ENCODE measurements at regions of chrX and their contacts with region 1.

Region 1: GRCh38 chrX:24100713-24101112 is 46.0 kb downstream of the EIF2S3 start:
- DNase-seq: peak; percentile 6
- ATAC-seq: no peak
- H3K4me3 Mint-ChIP-seq: no peak overlapping the region
- H3K27ac Mint-ChIP-seq: no peak overlapping the region
- H3K4me1 Mint-ChIP-seq: peaks cover 18% of the 10 kb centered on the region
- H3K27me3 Mint-ChIP-seq: no peaks in the 10 kb centered on the region

Region 2: GRCh38 chrX:23822397-23822796 is 278.3 kb before region 1 on chrX:
- CTCF ChIA-PET with region 1: no interaction called
- POLR2A ChIA-PET with region 1: no interaction called
- intact Hi-C with region 1: no loop called
- DNase-seq: no peak
- ATAC-seq: no peak
- H3K4me3 Mint-ChIP-seq: no peak overlapping the region
- H3K27ac Mint-ChIP-seq: no peak overlapping the region
- H3K4me1 Mint-ChIP-seq: no peaks in the 10 kb centered on the region
- H3K27me3 Mint-ChIP-seq: no peaks in the 10 kb centered on the region

Region 3: GRCh38 chrX:24133280-24133679 is 32.6 kb after region 1 on chrX:
- CTCF ChIA-PET with region 1: no interaction called
- POLR2A ChIA-PET with region 1: no interaction called
- intact Hi-C with region 1: no loop called
- DNase-seq: no peak
- ATAC-seq: no peak
- H3K4me3 Mint-ChIP-seq: no peak overlapping the region
- H3K27ac Mint-ChIP-seq: no peak overlapping the region
- H3K4me1 Mint-ChIP-seq: no peaks in the 10 kb centered on the region
- H3K27me3 Mint-ChIP-seq: no peaks in the 10 kb centered on the region

Region 4: DNA sequence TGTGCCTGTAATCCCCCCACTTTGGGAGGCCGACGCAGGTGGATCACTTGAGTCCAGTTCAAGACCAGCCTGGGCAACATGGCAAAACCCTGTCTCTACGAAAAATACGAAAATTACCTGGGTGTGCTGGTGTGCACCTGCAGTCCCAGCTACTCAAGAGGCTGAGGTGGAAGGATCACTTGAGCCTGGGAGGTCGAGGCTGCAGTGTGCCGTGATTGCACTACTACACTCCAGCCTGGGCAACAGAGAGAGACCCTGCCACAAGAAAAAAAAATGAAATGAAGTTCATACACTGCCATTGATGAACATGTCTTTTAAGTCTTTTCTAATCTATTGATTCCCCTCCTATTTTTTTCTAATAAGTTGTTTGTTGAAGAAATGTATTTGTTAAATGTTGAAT is 43.8 kb after region 1 on chrX:
- CTCF ChIA-PET with region 1: no interaction called
- POLR2A ChIA-PET with region 1: interaction called, 5 read pairs
- intact Hi-C with region 1: loop called in 1 of 2 experiments (anchors 5 kb)
- DNase-seq: no peak
- ATAC-seq: no peak
- H3K4me3 Mint-ChIP-seq: no peak overlapping the region
- H3K27ac Mint-ChIP-seq: no peak overlapping the region
- H3K4me1 Mint-ChIP-seq: peaks cover 26% of the 10 kb centered on the region
- H3K27me3 Mint-ChIP-seq: no peaks in the 10 kb centered on the region

Region 5: GRCh38 chrX:24190500-24191156 is 89.9 kb after region 1 on chrX:
- CTCF ChIA-PET with region 1: no interaction called
- POLR2A ChIA-PET with region 1: no interaction called
- intact Hi-C with region 1: no loop called
- DNase-seq: no peak
- ATAC-seq: no peak
- H3K4me3 Mint-ChIP-seq: no peak overlapping the region
- H3K27ac Mint-ChIP-seq: peak overlapping the region; percentile 58
- H3K4me1 Mint-ChIP-seq: peaks cover 57% of the 10 kb centered on the region
- H3K27me3 Mint-ChIP-seq: no peaks in the 10 kb centered on the region

Region 6: DNA sequence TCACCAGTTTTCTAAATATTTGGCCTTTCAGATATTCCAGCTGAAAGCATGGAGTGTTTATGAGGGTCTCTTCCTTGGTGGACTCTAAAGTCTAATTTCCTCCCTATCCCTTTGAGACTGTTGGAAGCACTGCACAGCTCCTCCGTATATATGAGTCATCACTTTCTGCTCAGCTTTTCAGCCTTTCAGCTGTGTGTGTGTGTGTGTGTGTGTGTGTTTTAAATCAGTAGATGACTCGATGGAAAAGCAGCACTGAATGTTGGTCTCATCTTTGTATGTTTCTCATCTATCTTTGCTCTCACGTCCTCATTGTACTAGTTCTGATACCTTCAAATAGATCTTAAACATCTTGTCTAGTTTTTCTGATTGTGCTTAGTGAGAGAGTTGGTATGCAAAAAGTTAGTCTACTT is 130.4 kb after region 1 on chrX:
- CTCF ChIA-PET with region 1: no interaction called
- POLR2A ChIA-PET with region 1: interaction called, 16 read pairs
- intact Hi-C with region 1: no loop called
- DNase-seq: peak; percentile 21
- ATAC-seq: peak; percentile 69
- H3K4me3 Mint-ChIP-seq: no peak overlapping the region
- H3K27ac Mint-ChIP-seq: peak overlapping the region; percentile 55
- H3K4me1 Mint-ChIP-seq: peaks cover 4% of the 10 kb centered on the region
- H3K27me3 Mint-ChIP-seq: no peaks in the 10 kb centered on the region